WTC11 (cell line): ENCODE measurements at regions of chr3 and their contacts with region 1.

Region 1: GRCh38 chr3:77320514-77320913 is 280.6 kb downstream of the ROBO2 start:
- DNase-seq: no peak
- ATAC-seq: no peak
- H3K4me3 Mint-ChIP-seq: no peak overlapping the region
- H3K27ac Mint-ChIP-seq: no peak overlapping the region
- H3K4me1 Mint-ChIP-seq: peaks cover 13% of the 10 kb centered on the region
- H3K27me3 Mint-ChIP-seq: no peaks in the 10 kb centered on the region
- CTCF ChIP-seq: peak; percentile 71

Region 2: DNA sequence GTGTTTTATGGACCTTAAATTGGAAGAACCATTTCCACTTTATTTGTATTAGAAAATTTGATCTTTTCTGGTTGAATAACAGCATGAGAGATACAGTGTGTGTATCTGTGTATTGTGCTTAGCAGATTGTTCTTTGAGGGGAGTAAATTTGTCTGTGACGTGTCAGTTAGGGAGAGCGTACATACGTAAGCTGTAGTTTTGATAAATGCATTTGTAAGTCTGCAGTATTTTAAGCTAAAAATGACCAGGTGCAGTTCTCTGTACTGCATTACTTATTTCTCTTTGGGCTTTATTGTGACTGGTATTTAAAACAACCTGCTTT is 15.9 kb before region 1 on chr3:
- CTCF ChIA-PET with region 1: interaction called, 28 read pairs
- POLR2A ChIA-PET with region 1: no interaction called
- DNase-seq: no peak
- ATAC-seq: no peak
- H3K4me3 Mint-ChIP-seq: no peak overlapping the region
- H3K27ac Mint-ChIP-seq: no peak overlapping the region
- H3K4me1 Mint-ChIP-seq: peaks cover 20% of the 10 kb centered on the region
- H3K27me3 Mint-ChIP-seq: no peaks in the 10 kb centered on the region
- CTCF ChIP-seq: no peak

Region 3: DNA sequence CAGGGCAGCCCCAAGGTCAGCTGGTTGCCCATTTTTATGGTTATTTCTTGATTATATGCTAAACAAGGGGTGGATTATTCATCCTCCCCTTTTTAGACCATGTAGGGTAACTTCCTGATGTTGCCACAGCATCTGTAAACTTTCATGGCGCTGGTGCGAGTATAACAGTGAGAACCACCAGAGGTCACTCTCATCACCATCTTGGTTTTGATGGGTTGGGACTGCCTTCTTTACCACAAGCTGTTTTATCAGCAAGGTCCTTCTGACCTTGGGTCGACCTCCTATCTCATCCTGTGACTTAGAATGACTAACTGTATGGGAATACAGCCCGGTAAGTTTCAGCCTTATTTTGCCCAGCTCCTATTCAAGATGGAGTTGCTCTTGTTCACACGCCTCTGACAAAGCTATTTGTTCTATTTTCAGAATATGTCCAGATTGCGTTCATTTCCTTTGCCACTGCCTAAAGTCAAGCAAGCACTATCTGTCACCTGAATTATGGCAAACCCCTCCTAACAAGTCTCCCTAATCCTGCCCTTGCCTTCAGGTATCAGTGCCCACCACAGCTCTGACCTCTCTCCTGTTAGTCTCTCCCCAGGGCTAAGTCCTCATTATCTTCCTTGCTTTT is 27.8 kb after region 1 on chr3:
- CTCF ChIA-PET with region 1: interaction called, 13 read pairs
- POLR2A ChIA-PET with region 1: no interaction called
- DNase-seq: peak; percentile 54
- ATAC-seq: peak; percentile 92
- H3K4me3 Mint-ChIP-seq: no peak overlapping the region
- H3K27ac Mint-ChIP-seq: peak overlapping the region; percentile 20; the same call in 1 of the 2 replicates
- H3K4me1 Mint-ChIP-seq: peaks cover 35% of the 10 kb centered on the region
- H3K27me3 Mint-ChIP-seq: no peaks in the 10 kb centered on the region
- CTCF ChIP-seq: peak; percentile 45

Region 4: DNA sequence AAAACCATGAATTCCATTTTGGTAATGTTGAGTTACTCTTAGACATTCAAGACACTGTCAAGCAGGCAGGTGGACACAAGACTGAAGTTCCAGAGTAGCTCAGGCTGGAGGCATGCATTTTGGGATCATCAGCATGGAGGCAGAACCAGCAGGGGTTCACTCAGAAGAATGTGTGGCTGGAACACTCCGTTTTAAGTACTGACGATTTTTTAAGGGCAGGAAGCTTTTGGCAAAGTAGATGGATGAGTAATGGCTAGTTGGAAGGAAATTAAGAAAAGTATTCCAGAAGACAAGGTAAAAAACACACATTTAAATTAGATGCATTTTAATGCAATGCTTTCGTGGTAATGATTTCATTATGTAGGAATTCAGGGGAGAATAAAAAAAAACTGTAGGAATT is 139.8 kb after region 1 on chr3:
- CTCF ChIA-PET with region 1: no interaction called
- POLR2A ChIA-PET with region 1: no interaction called
- DNase-seq: no peak
- ATAC-seq: no peak
- H3K4me3 Mint-ChIP-seq: no peak overlapping the region
- H3K27ac Mint-ChIP-seq: no peak overlapping the region
- H3K4me1 Mint-ChIP-seq: peaks cover 16% of the 10 kb centered on the region
- H3K27me3 Mint-ChIP-seq: no peaks in the 10 kb centered on the region
- CTCF ChIP-seq: no peak